Sigmoid colon (tissue), 7 donors: ENCODE measurements at regions of chr17 and their contacts with region 1.

Region 1: DNA sequence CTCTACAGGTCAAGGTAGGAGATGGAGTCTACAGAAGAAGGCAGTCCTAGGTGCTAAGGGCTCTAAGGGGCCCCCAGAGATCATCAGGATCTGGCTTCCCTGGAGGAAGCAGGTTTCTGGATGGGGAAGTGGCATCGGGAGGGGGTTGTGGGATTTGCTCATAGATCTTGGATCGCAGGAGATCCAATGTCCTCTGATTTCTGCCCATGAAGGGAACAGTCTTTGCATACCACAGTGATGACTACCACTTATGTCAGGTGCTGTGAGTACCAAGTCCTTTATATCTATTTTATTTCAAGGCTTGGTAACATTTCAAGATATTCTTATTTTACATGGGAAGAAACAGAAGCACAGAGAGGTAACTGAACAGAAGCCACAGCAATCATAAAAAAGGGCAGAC is 164.0 kb downstream of the RGS9 start:
- DNase-seq: no peak
- H3K4me3 ChIP-seq: no peak overlapping the region
- H3K27ac ChIP-seq: no peak overlapping the region
- H3K4me1 ChIP-seq: no peaks in the 10 kb centered on the region
- H3K27me3 ChIP-seq: no peaks in the 10 kb centered on the region
- CTCF ChIP-seq: no peak
- EP300 ChIP-seq: no peak
- POLR2A ChIP-seq: no peak

Region 2: GRCh38 chr17:65100316-65101140 is 200.7 kb before region 1 on chr17:
- intact Hi-C with region 1: no loop called
- DNase-seq: peak; percentile 93
- H3K4me3 ChIP-seq: peak overlapping the region; percentile 38 to 67 (median 58)
- H3K27ac ChIP-seq: peak overlapping the region; percentile 77 to 83 (median 82)
- H3K4me1 ChIP-seq: peaks cover 0 to 32% (median 16%) of the 10 kb centered on the region in 4 donors
- H3K27me3 ChIP-seq: no peaks in the 10 kb centered on the region
- CTCF ChIP-seq: peak; percentile 93 to 99 (median 98)
- EP300 ChIP-seq: no peak
- POLR2A ChIP-seq: no peak

Region 3: GRCh38 chr17:65455972-65456343 is 154.8 kb after region 1 on chr17:
- intact Hi-C with region 1: loop called (anchors 10 kb)
- DNase-seq: no peak
- H3K4me3 ChIP-seq: no peak overlapping the region
- H3K27ac ChIP-seq: peak overlapping the region in 2 of 4 donors; percentile 12 to 53
- H3K4me1 ChIP-seq: peaks cover 0 to 18% (median 16%) of the 10 kb centered on the region in 4 donors
- H3K27me3 ChIP-seq: no peaks in the 10 kb centered on the region
- CTCF ChIP-seq: peak in 3 of 4 experiments; percentile 8 to 39 (median 21)
- EP300 ChIP-seq: no peak
- POLR2A ChIP-seq: no peak